ENCODE measurements at regions of chr1 and their contacts with region 1.

Region 1: DNA sequence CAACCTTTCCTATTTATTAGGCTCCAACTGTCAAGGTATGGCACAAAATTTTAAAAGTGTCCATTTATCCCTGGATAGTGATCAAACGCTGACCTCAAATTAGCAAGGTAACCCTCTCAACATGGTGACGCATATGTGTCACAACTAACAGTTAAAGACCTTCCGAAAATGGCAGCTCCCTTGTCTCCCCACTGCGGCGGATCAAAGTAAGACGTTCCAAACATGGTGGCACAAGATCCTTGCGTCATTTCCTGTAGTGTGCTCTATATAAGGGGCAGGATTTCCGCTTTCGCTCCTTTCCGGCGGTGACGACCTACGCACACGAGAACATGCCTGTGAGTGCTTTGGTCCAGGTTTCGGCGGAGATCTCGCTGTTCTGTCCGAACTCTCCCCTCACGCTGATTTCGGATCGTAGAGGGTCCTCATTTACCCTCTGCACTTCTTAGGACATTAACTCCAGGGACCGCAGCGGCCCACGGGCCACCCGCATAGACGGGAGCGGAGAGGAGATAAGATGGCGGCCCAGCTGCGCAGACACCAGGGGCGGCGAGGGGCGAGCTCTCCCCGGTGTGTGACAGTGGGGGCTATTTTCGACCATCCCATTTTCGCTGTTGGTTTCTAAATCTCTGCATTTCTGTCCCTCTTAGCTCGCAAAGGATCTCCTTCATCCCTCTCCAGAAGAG is at the start of gene RPS27:
- DNase-seq: peak; percentile 98
- H3K4me3 ChIP-seq: peak within 1 kb of the TSS; percentile 81
- H3K27ac ChIP-seq: peak within 1 kb of the TSS; percentile 96
- H3K4me1 ChIP-seq: peaks cover 17% of the 10 kb centered on the region
- H3K27me3 ChIP-seq: no peaks in the 10 kb centered on the region
- CTCF ChIP-seq: no peak
- total RNA-seq, gene RPS27: 1,464 and 1,548 TPM in 2 replicates

Region 2: GRCh38 chr1:153670859-153671627 is 319.6 kb before region 1 on chr1 and contains the start of gene ILF2:
- CTCF ChIA-PET with region 1: interaction called, 3 read pairs
- POLR2A ChIA-PET with region 1: interaction called, 8 read pairs
- intact Hi-C with region 1: loop called (anchors 2 kb)
- DNase-seq: peak; percentile 99
- H3K4me3 ChIP-seq: peak within 1 kb of the TSS; percentile 70
- H3K27ac ChIP-seq: peak within 1 kb of the TSS; percentile 85
- H3K4me1 ChIP-seq: peaks cover 8% of the 10 kb centered on the region
- H3K27me3 ChIP-seq: no peaks in the 10 kb centered on the region
- CTCF ChIP-seq: peak; percentile 41; the same call in 1 of the 2 replicates
- total RNA-seq, gene ILF2: 391 and 420 TPM in 2 replicates

Region 3: DNA sequence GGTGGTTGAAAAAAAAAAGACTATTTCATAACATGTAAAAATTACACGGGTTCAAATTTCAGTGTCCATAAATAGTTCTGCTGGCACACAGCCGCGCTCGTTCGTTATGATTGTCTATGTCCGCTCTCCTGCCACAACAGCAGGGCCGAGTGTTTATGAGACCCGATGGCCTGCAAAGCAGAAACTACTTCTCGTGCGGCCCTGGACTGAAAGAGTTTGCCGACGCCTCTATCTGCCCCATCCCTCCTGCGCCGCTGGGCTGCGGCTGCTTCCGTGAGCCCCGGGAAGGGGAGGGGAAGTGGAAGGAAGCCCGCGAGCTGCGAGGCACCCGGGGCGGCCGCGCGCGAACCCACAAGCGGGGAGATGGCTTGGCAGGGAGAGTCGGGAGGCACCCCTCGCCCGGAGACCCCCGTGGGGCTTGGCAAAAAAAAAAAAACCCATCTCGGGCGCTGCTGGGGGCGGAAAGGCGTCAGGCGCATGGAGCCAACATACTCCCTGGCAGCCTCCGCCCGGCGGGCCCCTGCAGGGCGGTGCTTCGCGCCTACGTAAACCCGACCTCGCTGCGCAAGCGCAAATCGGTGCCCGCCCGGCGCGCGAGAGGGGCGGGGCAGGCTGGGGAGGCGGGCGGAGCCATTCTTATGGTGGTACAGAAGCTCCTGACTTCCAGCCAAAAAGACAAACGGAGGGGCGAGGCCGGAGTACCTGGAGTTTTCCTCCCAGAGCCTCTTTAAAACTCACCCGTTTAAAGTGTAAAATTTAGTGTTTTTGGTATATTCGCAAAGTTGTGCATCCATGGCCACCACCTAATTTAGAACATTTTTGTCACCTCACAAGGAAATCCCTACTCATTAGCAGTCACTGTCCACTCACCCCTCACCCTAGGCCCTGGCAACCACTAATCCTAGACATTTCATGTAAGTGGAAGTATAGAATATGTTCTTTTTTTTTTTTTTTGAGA is 207.1 kb before region 1 on chr1:
- CTCF ChIA-PET with region 1: no interaction called
- POLR2A ChIA-PET with region 1: no interaction called
- intact Hi-C with region 1: loop called (anchors 5 kb)
- DNase-seq: peak; percentile 95
- H3K4me3 ChIP-seq: peak overlapping the region; percentile 59
- H3K27ac ChIP-seq: peak overlapping the region; percentile 85
- H3K4me1 ChIP-seq: peaks cover 6% of the 10 kb centered on the region
- H3K27me3 ChIP-seq: no peaks in the 10 kb centered on the region
- CTCF ChIP-seq: no peak

Region 4: GRCh38 chr1:153827168-153827964 is 163.2 kb before region 1 on chr1:
- CTCF ChIA-PET with region 1: no interaction called
- POLR2A ChIA-PET with region 1: no interaction called
- intact Hi-C with region 1: loop called (anchors 5 kb)
- DNase-seq: no peak
- H3K4me3 ChIP-seq: no peak overlapping the region
- H3K27ac ChIP-seq: no peak overlapping the region
- H3K4me1 ChIP-seq: no peaks in the 10 kb centered on the region
- H3K27me3 ChIP-seq: no peaks in the 10 kb centered on the region
- CTCF ChIP-seq: peak; percentile 44; the same call in 1 of the 2 replicates

Region 5: GRCh38 chr1:154220071-154220969 is 229.7 kb after region 1 on chr1 and contains the start of gene UBAP2L:
- CTCF ChIA-PET with region 1: no interaction called
- POLR2A ChIA-PET with region 1: interaction called, 11 read pairs
- intact Hi-C with region 1: no loop called
- DNase-seq: peak; percentile 99
- H3K4me3 ChIP-seq: peak within 1 kb of the TSS; percentile 71
- H3K27ac ChIP-seq: peak within 1 kb of the TSS; percentile 96
- H3K4me1 ChIP-seq: peaks cover 23% of the 10 kb centered on the region
- H3K27me3 ChIP-seq: no peaks in the 10 kb centered on the region
- CTCF ChIP-seq: no peak
- total RNA-seq, gene UBAP2L: 249 and 269 TPM in 2 replicates

Measured in A673 (cell line).